Mucosa of descending colon (tissue), 3 donors: ENCODE measurements at regions of chrX and their contacts with region 1.

Region 1: GRCh38 chrX:108415891-108416290 is 22.3 kb downstream of the COL4A6 start:
- DNase-seq: no peak
- ATAC-seq: no peak
- H3K4me3 ChIP-seq: no peak overlapping the region
- H3K4me1 ChIP-seq: no peaks in the 10 kb centered on the region
- CTCF ChIP-seq: no peak

Region 2: DNA sequence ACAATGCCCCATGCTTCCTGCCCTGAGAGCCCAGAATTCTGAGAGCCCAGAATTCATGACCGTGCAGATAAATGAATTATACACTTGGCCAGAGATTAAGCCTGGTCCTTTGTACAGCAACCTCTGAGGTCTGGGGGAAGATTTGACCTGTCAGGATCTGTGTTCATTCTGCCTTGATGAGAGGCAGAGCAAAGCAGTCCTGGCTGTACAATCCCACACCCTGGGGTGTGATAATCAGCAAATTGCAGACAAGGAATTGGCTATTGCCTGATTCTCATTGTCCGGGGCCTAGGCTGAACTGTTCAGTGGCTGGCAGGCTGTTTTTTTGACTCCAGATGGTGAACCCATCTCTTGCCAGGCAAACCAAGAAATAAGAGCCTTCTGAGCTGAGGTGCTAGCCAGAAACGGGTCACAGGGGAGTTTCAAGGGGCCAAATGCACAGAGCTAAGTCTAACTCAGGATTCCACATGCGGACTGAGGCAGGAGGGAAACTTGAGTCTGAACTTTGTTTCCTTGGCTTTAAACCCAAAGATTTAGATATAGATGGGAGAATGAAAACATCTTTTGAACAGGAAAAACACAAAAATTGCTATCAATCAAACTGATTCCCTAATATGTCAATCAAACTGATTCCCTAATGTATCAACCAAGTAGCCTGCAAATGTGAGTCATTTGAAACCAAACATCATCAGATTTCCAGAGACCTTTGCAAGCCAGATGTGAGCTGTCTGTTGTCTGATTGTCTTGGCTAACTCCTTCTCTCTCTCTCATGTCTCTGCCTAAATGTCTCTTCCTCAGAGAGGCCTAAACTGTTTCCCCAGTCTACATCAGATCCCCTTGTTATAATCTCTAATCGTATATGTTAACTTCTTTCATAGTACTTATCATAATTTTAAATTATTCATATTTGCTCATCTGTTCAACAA is 165.0 kb before region 1 on chrX:
- intact Hi-C with region 1: no loop called
- DNase-seq: no peak
- ATAC-seq: no peak
- H3K4me3 ChIP-seq: no peak overlapping the region
- H3K4me1 ChIP-seq: no peaks in the 10 kb centered on the region
- CTCF ChIP-seq: no peak

Region 3: GRCh38 chrX:108516184-108516583 is 100.3 kb after region 1 on chrX:
- intact Hi-C with region 1: loop called in 1 of 2 experiments (anchors 5 kb)
- DNase-seq: no peak
- ATAC-seq: no peak
- H3K4me3 ChIP-seq: no peak overlapping the region
- H3K4me1 ChIP-seq: no peaks in the 10 kb centered on the region
- CTCF ChIP-seq: no peak